ENCODE measurements at regions of chr17 and their contacts with region 1.

Region 1: DNA sequence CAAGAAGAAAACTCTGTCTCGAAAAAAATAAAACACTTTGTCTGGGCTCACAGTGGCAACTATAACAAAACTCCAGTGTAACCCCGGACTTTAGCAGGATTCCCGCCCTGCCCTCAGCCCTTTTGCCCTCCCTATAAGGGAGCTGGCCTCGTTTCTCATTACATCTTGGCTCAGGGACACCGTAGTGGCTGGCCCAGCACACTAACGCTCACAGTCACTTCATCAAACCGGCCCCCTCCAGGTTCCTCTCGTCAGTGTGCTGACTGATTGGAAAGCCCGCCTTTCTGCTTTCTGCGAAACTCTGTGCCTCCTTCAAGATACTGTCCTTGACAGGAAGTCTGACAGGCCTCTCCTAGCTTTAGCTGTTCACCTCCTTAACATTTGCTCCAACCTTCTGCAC is 11.2 kb upstream of the MYO1C start:
- DNase-seq: no peak
- H3K4me3 ChIP-seq: no peak overlapping the region
- H3K4me3 Mint-ChIP-seq: no peak overlapping the region
- H3K27ac ChIP-seq: no peak overlapping the region
- H3K27ac Mint-ChIP-seq: no peak overlapping the region
- H3K4me1 ChIP-seq: no peaks in the 10 kb centered on the region
- H3K4me1 Mint-ChIP-seq: no peaks in the 10 kb centered on the region
- H3K27me3 ChIP-seq: no peaks in the 10 kb centered on the region
- H3K27me3 Mint-ChIP-seq: peaks cover 0 to 5% (median 3%) of the 10 kb centered on the region in 3 donors
- CTCF ChIP-seq: no peak

Region 2: GRCh38 chr17:1447052-1447451 is 56.6 kb before region 1 on chr17:
- intact Hi-C with region 1: loop called in 1 of 2 experiments (anchors 5 kb)
- DNase-seq: no peak
- H3K4me3 ChIP-seq: no peak overlapping the region
- H3K4me3 Mint-ChIP-seq: no peak overlapping the region
- H3K27ac ChIP-seq: peak overlapping the region in 1 of 2 donors; percentile 59
- H3K27ac Mint-ChIP-seq: peak overlapping the region in 2 of 7 donors; percentile 30 to 74
- H3K4me1 ChIP-seq: peaks cover 12 to 13% of the 10 kb centered on the region in 2 donors
- H3K4me1 Mint-ChIP-seq: peaks cover 27% of the 10 kb centered on the region
- H3K27me3 ChIP-seq: no peaks in the 10 kb centered on the region
- H3K27me3 Mint-ChIP-seq: peaks cover 0 to 3% (median 0%) of the 10 kb centered on the region in 3 donors
- CTCF ChIP-seq: no peak

Region 3: DNA sequence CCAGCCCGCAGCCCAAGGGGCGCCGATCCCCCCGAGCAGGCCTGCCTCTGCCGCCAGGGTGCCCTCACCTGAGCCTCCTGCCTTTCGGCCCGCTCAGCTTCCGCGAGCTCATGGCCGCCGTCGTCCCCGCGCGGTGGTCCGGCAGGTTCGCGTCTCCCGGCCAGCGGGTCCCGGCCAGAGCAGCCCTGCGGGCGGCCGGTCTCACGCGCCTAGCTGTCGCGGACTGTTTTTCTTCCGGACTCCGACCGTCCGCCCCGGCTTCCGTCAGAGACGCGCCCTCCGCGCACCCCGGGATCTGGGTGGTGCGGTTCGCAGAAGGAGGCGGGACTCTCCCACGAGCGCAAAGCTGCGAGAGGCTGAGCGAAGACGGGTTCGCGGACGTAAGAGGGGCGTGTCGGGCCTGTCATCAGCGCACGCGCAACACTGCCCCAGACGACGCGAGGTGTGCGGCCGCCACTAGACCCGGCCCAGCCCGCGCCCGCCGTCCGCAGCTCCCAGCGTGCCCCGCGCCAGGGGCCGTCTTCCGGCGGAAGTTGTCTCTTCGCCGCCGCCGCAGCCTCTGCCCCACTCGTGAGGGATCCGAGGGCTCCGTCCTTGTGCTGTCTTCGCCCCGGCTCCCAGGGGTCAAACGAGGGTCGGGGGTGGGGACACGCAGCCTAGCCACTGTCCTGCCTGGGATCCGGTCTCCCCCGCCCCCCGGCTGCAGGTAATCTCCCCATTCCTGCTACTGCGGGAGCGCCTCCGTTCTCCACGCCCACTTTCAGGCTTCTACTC is 12.9 kb after region 1 on chr17 and contains the start of gene INPP5K:
- intact Hi-C with region 1: no loop called
- DNase-seq: peak; percentile 98 to 99 (median 99)
- H3K4me3 ChIP-seq: peak within 1 kb of the TSS; percentile 73 to 99 (median 87)
- H3K4me3 Mint-ChIP-seq: peak within 1 kb of the TSS; percentile 90 to 94
- H3K27ac ChIP-seq: peak within 1 kb of the TSS; percentile 54 to 95
- H3K27ac Mint-ChIP-seq: peak within 1 kb of the TSS; percentile 91 to 95 (median 93)
- H3K4me1 ChIP-seq: peaks cover 22 to 29% of the 10 kb centered on the region in 2 donors
- H3K4me1 Mint-ChIP-seq: peaks cover 18% of the 10 kb centered on the region
- H3K27me3 ChIP-seq: no peaks in the 10 kb centered on the region
- H3K27me3 Mint-ChIP-seq: no peaks in the 10 kb centered on the region
- CTCF ChIP-seq: no peak
- polyA plus RNA-seq, gene INPP5K: 50.3 to 58.7 (median 53.0) TPM

Measured in CD14-positive monocyte (primary cell).